MCF 10A (cell line): ENCODE measurements at regions of chr10 and their contacts with region 1.

Region 1: GRCh38 chr10:49164559-49165188 is 23.5 kb downstream of the TMEM273 start:
- DNase-seq: peak; percentile 47
- H3K4me3 Mint-ChIP-seq: no peak overlapping the region
- H3K27ac Mint-ChIP-seq: no peak overlapping the region
- H3K4me1 Mint-ChIP-seq: peaks cover 6% of the 10 kb centered on the region
- H3K27me3 Mint-ChIP-seq: peaks cover 23% of the 10 kb centered on the region
- CTCF ChIP-seq: peak; percentile 30

Region 2: DNA sequence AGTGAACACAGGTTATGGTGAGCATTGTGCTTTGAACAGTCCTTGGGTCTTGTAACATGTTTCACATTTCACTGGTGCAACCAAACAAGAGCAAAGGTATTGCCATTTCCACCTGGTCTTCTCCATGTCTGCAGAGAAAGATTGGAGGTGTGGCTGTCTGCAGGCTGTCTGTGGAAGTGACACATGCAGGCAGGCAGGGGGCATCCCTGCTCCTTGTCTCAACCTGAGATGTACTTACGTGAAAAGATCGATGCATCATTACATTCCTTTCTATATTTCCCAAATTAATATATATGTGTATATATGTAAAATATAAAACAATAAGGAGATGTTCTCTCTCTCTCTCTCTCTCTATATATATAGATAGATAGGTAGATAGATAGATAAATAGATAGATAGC is 279.3 kb before region 1 on chr10:
- CTCF ChIA-PET with region 1: interaction called, 11 read pairs
- POLR2A ChIA-PET with region 1: no interaction called
- intact Hi-C with region 1: loop called (anchors 2 kb)
- DNase-seq: peak; percentile 44
- H3K4me3 Mint-ChIP-seq: no peak overlapping the region
- H3K27ac Mint-ChIP-seq: no peak overlapping the region
- H3K4me1 Mint-ChIP-seq: no peaks in the 10 kb centered on the region
- H3K27me3 Mint-ChIP-seq: peaks cover 19% of the 10 kb centered on the region
- CTCF ChIP-seq: peak; percentile 30

Region 3: DNA sequence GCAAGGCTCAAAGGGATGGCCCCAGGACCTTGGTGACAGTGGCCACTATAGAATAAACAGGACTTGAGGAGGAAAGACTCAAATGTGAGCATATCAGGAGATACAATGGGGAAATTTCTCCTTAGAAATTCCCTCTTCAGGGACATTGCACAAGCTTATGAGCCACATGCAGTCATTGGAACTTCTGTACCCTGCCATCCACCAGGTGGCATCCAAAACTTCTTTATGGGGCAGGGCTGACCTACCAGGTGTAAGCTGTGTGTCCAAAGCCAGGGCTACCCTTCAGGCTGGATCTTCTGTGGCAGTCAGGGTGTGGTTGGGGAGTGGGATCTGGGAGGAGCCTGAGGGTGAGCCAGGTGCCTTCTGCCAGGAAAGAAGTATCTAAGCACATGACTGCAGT is 188.5 kb before region 1 on chr10:
- CTCF ChIA-PET with region 1: interaction called, 44 read pairs
- POLR2A ChIA-PET with region 1: no interaction called
- intact Hi-C with region 1: loop called (anchors 1 kb)
- DNase-seq: peak; percentile 58
- H3K4me3 Mint-ChIP-seq: no peak overlapping the region
- H3K27ac Mint-ChIP-seq: no peak overlapping the region
- H3K4me1 Mint-ChIP-seq: no peaks in the 10 kb centered on the region
- H3K27me3 Mint-ChIP-seq: peaks cover 17% of the 10 kb centered on the region
- CTCF ChIP-seq: no peak

Region 4: DNA sequence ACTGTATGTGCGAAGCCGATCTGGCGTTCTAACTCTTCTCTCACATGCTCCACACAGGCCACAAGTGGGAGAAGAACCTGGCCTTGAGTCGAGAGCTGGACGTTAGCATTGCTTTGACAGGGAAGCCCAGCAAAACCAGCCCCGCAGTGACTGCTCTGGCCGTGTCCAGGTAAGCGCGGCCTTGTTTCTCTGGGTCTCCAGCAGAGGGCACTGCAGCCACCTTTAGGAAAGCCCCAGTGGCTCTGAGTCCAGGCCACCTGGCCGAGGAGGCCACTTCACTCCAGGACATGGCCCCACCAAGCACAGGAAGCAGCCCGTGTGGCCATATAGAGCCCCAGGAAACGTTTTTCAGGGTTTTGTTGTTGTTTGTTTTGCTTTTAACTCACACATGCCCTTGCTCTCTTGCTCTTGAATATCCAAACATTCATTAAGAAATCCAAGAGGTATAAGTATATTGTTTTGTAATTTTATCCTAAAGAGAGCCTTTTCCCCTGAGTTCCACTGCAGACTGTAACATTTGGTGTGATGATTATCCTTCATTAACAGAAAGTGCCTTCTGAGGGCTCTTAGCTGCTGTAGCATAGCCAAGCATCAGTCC is 183.3 kb before region 1 on chr10:
- CTCF ChIA-PET with region 1: interaction called, 44 read pairs
- POLR2A ChIA-PET with region 1: no interaction called
- intact Hi-C with region 1: loop called (anchors 1 kb)
- DNase-seq: peak; percentile 63
- H3K4me3 Mint-ChIP-seq: no peak overlapping the region
- H3K27ac Mint-ChIP-seq: no peak overlapping the region
- H3K4me1 Mint-ChIP-seq: no peaks in the 10 kb centered on the region
- H3K27me3 Mint-ChIP-seq: no peaks in the 10 kb centered on the region
- CTCF ChIP-seq: peak; percentile 73